ENCODE measurements at regions of chr22 and their contacts with region 1.

Region 1: DNA sequence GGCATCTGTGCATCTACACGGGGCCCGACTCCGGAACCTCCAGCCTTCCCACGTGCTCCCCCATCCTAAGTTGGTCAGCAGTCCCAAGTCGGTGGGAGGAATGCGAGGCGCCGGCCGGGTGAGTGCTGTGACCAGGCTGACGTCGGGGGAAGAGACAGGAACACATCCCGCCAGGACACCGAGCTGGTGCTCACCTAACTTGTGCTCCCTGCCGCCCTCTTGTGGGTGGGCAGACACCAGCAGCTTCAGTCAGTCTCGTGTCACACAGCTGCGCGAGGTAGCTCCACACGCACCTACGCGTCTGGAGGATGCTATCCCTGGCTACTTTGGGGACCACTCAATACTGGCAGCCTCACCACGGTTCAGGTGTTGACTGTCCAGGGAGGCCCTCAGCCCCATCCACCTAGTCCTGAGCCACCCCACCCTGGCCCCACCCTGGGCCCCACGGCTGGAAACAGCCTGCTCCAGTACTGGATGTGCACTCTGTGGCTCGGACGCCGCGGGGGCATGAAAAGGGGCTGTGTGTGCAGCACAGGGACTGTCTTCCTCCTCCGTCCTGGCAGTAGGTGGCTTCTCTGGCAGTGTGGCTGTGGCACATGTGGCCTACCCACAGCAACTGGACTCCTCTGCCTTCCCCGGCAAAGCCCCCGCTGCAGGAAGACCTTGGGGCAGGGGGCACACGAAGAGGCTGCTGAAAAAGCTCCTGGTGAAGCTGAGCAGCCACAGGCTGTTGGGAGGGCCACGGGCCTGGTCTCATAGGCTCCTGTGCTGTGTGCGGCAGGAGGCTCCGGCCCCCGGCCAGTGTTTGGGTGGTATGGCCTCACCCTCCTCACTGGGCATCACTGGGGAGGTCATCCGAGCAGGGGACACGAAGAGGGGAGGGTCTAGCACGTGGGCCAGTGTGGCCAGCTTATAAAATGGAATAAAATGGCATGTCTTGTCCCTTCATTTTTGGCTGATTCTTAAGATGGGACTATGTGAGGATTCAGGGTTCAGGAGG is 11.2 kb upstream of the BID start:
- DNase-seq: peak; percentile 85
- ATAC-seq: peak; percentile 31
- H3K4me3 Mint-ChIP-seq: no peak overlapping the region
- H3K27ac Mint-ChIP-seq: no peak overlapping the region
- H3K4me1 Mint-ChIP-seq: peaks cover 20% of the 10 kb centered on the region
- H3K27me3 Mint-ChIP-seq: no peaks in the 10 kb centered on the region

Region 2: GRCh38 chr22:17754233-17754925 is 31.1 kb before region 1 on chr22:
- CTCF ChIA-PET with region 1: interaction called, 13 read pairs
- POLR2A ChIA-PET with region 1: no interaction called
- intact Hi-C with region 1: no loop called
- DNase-seq: peak; percentile 70
- ATAC-seq: peak; percentile 69
- H3K4me3 Mint-ChIP-seq: no peak overlapping the region
- H3K27ac Mint-ChIP-seq: no peak overlapping the region
- H3K4me1 Mint-ChIP-seq: peaks cover 2% of the 10 kb centered on the region
- H3K27me3 Mint-ChIP-seq: no peaks in the 10 kb centered on the region